CD4-positive, alpha-beta memory T cell (primary cell): ENCODE measurements at regions of chr13 and their contacts with region 1.

Region 1: GRCh38 chr13:106186366-106187030 is 349.0 kb downstream of the EFNB2 start:
- DNase-seq: no peak
- H3K4me3 ChIP-seq: no peak overlapping the region
- H3K4me3 Mint-ChIP-seq: no peak overlapping the region
- H3K27ac ChIP-seq: no peak overlapping the region
- H3K27ac Mint-ChIP-seq: no peak overlapping the region
- H3K4me1 ChIP-seq: no peaks in the 10 kb centered on the region
- H3K4me1 Mint-ChIP-seq: no peaks in the 10 kb centered on the region
- H3K27me3 ChIP-seq: no peaks in the 10 kb centered on the region
- H3K27me3 Mint-ChIP-seq: peaks cover 2 to 3% of the 10 kb centered on the region in 2 donors

Region 2: DNA sequence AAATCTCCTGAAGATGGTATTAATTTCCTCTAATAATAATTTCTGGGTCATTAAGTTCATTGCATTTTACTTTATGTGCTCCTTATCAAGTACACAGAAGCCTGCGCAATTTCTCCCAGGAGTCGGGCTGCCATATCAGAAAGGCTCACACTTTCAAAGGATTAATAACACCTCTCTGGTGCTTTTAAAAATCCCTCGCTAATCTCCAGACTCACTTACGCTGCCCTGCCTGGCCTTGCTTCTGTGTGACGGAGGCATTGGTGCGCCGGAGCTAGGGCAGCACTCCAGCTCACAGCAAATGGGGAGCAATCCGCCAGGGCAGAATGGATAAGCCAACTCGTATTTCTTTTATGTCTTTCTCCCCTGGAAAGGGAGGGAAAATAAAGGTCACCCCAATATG is 48.1 kb after region 1 on chr13:
- CTCF ChIA-PET with region 1: no interaction called
- POLR2A ChIA-PET with region 1: no interaction called
- intact Hi-C with region 1: loop called (anchors 1 kb)
- DNase-seq: no peak
- H3K4me3 ChIP-seq: no peak overlapping the region
- H3K4me3 Mint-ChIP-seq: no peak overlapping the region
- H3K27ac ChIP-seq: no peak overlapping the region
- H3K27ac Mint-ChIP-seq: no peak overlapping the region
- H3K4me1 ChIP-seq: no peaks in the 10 kb centered on the region
- H3K4me1 Mint-ChIP-seq: no peaks in the 10 kb centered on the region
- H3K27me3 ChIP-seq: no peaks in the 10 kb centered on the region
- H3K27me3 Mint-ChIP-seq: no peaks in the 10 kb centered on the region

Region 3: DNA sequence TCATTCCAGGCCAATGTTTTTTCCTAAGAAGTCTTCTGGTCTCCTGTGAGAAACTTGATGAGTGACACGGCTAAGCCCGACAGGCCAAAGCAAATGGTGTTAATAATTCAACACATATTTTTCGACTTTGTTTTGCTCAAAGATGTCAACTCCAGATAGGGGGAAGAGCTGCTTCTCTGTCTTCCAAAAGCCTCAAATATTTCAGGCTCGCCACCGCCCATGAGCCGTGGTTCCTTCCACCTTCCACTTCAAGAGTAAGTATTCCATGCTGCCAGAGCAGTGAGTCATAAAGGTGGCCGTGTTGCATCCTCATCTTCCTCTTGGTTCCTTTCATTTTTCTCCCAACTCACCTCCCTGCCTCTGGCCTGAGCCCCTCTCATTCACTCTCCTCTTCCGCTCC is 76.4 kb after region 1 on chr13:
- CTCF ChIA-PET with region 1: no interaction called
- POLR2A ChIA-PET with region 1: no interaction called
- intact Hi-C with region 1: no loop called
- DNase-seq: no peak
- H3K4me3 ChIP-seq: no peak overlapping the region
- H3K4me3 Mint-ChIP-seq: no peak overlapping the region
- H3K27ac ChIP-seq: no peak overlapping the region
- H3K27ac Mint-ChIP-seq: no peak overlapping the region
- H3K4me1 ChIP-seq: no peaks in the 10 kb centered on the region
- H3K4me1 Mint-ChIP-seq: no peaks in the 10 kb centered on the region
- H3K27me3 ChIP-seq: no peaks in the 10 kb centered on the region
- H3K27me3 Mint-ChIP-seq: peaks cover 0 to 4% of the 10 kb centered on the region in 2 donors

Region 4: DNA sequence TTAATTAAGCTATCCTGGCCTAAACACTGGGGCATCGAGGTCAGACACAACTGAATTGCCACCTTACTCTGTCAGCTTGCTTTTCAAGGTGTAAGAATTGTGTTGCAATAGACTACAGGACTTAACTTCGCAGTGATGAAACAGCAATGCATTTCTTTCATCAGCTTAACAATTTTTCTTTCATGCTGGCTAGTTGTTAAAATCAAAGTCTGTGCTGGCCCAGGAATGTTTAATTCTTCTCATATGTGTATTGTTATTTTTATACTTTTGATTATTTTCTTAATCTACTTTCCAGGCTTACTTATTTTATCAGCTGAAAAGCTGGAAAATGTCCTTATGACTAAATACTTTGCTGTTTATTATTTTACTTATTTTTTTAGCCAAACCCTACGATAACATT is 269.3 kb after region 1 on chr13:
- CTCF ChIA-PET with region 1: no interaction called
- POLR2A ChIA-PET with region 1: no interaction called
- intact Hi-C with region 1: no loop called
- DNase-seq: no peak
- H3K4me3 ChIP-seq: no peak overlapping the region
- H3K4me3 Mint-ChIP-seq: no peak overlapping the region
- H3K27ac ChIP-seq: no peak overlapping the region
- H3K27ac Mint-ChIP-seq: no peak overlapping the region
- H3K4me1 ChIP-seq: no peaks in the 10 kb centered on the region
- H3K4me1 Mint-ChIP-seq: no peaks in the 10 kb centered on the region
- H3K27me3 ChIP-seq: no peaks in the 10 kb centered on the region
- H3K27me3 Mint-ChIP-seq: peaks cover 8 to 12% of the 10 kb centered on the region in 2 donors